ENCODE measurements at regions of chr19 and their contacts with region 1.

Region 1: DNA sequence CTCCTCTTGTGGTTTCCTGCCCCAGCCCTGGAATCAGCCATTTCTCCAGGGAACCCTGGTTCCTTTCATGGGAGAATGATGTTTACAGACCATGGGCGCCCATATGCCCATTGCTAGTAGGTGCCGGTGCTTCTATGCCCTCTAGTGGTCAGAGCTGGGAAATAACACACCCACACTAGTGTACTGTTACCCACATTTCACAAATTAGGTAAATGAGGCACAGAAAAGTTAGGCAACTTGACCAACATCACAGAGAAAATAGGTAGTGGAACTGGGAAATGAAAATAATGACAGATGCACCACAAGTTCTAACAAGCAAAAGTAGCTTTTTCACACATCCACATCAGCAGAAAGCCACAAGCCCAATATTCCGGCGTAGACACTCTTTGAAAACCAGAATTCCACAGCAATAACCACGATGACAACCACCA is 1.3 kb upstream of the CEACAM3 start:
- DNase-seq: peak; percentile 81
- H3K4me3 ChIP-seq: no peak overlapping the region
- H3K27ac ChIP-seq: no peak overlapping the region
- H3K4me1 ChIP-seq: no peaks in the 10 kb centered on the region
- H3K27me3 ChIP-seq: no peaks in the 10 kb centered on the region
- CTCF ChIP-seq: peak; percentile 90

Region 2: DNA sequence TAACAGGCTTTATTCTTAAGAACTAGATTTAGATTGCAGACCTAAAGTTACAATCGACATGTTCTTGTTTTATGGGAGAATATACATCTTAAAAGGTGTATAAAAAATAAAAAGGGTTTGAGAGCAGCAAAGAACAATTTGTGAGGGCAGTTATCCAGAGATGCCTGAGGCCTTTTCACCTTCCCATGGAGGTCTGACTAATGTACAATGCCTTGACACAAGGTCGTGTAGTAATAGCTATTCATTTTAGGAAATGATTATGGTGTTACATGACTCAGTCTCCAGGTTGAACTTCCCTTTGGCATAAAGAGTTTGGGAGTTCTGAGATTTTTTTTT is 19.7 kb before region 1 on chr19:
- CTCF ChIA-PET with region 1: interaction called, 13 read pairs
- POLR2A ChIA-PET with region 1: no interaction called
- intact Hi-C with region 1: no loop called
- DNase-seq: no peak
- H3K4me3 ChIP-seq: no peak overlapping the region
- H3K27ac ChIP-seq: no peak overlapping the region
- H3K4me1 ChIP-seq: no peaks in the 10 kb centered on the region
- H3K27me3 ChIP-seq: no peaks in the 10 kb centered on the region
- CTCF ChIP-seq: no peak

Region 3: GRCh38 chr19:41821003-41821735 is 26.1 kb after region 1 on chr19:
- CTCF ChIA-PET with region 1: interaction called, 17 read pairs
- POLR2A ChIA-PET with region 1: no interaction called
- intact Hi-C with region 1: loop called (anchors 2 kb)
- DNase-seq: peak; percentile 73
- H3K4me3 ChIP-seq: no peak overlapping the region
- H3K27ac ChIP-seq: no peak overlapping the region
- H3K4me1 ChIP-seq: no peaks in the 10 kb centered on the region
- H3K27me3 ChIP-seq: no peaks in the 10 kb centered on the region
- CTCF ChIP-seq: peak; percentile 84

Region 4: DNA sequence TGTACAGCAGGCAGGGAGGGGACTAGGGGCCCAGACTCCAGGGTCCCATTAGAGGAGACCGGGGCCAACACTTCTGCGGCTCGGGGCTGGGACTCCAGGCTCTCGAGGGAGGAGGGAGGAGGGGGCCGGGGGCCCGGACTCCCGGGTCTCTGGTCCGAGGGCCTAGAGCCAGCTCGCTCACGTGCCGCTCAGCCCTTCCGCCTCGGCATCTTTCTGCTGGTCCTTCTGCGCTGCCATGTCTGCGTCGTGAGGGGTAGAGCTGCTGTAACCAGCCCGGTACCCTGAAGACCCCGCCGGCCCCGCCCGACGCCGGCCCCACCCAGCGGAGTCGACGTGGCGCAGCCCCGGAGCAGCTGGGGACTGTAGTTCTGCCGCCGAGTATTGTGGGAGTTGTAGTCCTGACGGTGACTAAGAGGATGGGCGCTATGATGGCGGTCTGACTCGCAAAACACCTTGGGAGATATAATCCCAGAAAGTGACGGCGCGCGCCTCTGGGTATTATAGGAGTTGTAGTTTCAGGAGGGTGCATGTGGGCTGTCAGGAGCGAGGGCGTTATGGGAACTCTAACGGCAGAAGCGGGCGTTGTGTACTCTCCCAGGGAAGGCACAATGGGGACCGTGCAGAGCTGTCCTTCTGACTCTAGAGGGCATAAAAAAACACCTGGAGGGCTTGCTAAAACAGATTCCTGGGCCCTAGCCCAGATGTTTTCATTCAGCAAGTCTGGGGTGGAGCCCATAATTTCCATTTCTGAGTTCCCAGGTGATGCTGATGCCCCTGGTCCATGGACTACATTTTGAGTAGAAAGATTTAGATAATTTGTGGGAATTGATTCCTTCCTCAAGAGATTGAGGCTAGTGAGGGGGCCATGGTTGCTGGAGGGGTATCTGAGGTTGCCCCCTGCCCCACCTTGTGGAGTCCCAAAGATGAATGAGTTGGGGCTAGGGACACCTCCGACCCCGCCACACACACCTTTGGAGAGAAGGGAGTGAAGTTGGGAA is 164.3 kb after region 1 on chr19 and contains the start of gene RABAC1:
- CTCF ChIA-PET with region 1: interaction called, 11 read pairs
- POLR2A ChIA-PET with region 1: no interaction called
- intact Hi-C with region 1: loop called (anchors 10 kb)
- DNase-seq: peak; percentile 97
- H3K4me3 ChIP-seq: peak within 1 kb of the TSS; percentile 84
- H3K27ac ChIP-seq: peak within 1 kb of the TSS; percentile 70
- H3K4me1 ChIP-seq: peaks cover 7% of the 10 kb centered on the region
- H3K27me3 ChIP-seq: no peaks in the 10 kb centered on the region
- CTCF ChIP-seq: peak; percentile 32
- total RNA-seq, gene RABAC1: 114 and 124 TPM in 2 replicates

Region 5: GRCh38 chr19:42166316-42166715 is 371.3 kb after region 1 on chr19:
- CTCF ChIA-PET with region 1: no interaction called
- POLR2A ChIA-PET with region 1: no interaction called
- intact Hi-C with region 1: no loop called
- DNase-seq: no peak
- H3K4me3 ChIP-seq: no peak overlapping the region
- H3K27ac ChIP-seq: no peak overlapping the region
- H3K4me1 ChIP-seq: no peaks in the 10 kb centered on the region
- H3K27me3 ChIP-seq: no peaks in the 10 kb centered on the region
- CTCF ChIP-seq: no peak